ENCODE measurements at regions of chr14 and their contacts with region 1.

Region 1: DNA sequence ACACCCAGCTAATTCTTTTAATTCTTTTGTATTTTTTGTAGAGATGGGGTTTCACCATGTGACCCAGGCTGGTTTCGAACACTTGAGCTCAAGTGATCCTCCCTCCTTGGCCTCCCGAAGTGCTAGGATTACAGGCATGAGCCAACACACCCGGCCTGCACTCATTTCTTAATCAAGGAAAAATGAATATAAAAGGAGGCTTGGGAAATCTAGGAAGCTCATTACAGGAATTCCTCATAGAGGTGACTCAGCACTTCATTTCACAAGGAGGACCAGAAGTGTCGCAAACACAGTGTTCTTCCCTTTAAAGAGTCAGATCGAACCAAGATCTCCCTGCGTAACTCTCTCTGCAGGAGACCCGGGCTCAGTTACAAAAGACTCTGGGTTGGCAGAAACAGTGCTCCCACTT is 30.3 kb downstream of the NFKBIA start:
- DNase-seq: no peak
- H3K4me3 ChIP-seq: no peak overlapping the region
- H3K27ac ChIP-seq: peak overlapping the region; percentile 57 to 78 (median 76)
- H3K4me1 ChIP-seq: peaks cover 12 to 36% (median 32%) of the 10 kb centered on the region in 3 donors
- H3K27me3 ChIP-seq: no peaks in the 10 kb centered on the region
- CTCF ChIP-seq: no peak
- POLR2A ChIP-seq: no peak

Region 2: GRCh38 chr14:34582117-34582680 is 792.1 kb before region 1 on chr14:
- intact Hi-C with region 1: no loop called
- DNase-seq: no peak
- H3K4me3 ChIP-seq: no peak overlapping the region
- H3K27ac ChIP-seq: no peak overlapping the region
- H3K4me1 ChIP-seq: no peaks in the 10 kb centered on the region
- H3K27me3 ChIP-seq: no peaks in the 10 kb centered on the region
- CTCF ChIP-seq: no peak
- POLR2A ChIP-seq: no peak

Region 3: GRCh38 chr14:35114034-35114433 is 260.2 kb before region 1 on chr14:
- intact Hi-C with region 1: no loop called
- DNase-seq: no peak
- H3K4me3 ChIP-seq: no peak overlapping the region
- H3K27ac ChIP-seq: no peak overlapping the region
- H3K4me1 ChIP-seq: peaks cover 0 to 16% (median 0%) of the 10 kb centered on the region in 3 donors
- H3K27me3 ChIP-seq: no peaks in the 10 kb centered on the region
- CTCF ChIP-seq: no peak
- POLR2A ChIP-seq: no peak

Region 4: DNA sequence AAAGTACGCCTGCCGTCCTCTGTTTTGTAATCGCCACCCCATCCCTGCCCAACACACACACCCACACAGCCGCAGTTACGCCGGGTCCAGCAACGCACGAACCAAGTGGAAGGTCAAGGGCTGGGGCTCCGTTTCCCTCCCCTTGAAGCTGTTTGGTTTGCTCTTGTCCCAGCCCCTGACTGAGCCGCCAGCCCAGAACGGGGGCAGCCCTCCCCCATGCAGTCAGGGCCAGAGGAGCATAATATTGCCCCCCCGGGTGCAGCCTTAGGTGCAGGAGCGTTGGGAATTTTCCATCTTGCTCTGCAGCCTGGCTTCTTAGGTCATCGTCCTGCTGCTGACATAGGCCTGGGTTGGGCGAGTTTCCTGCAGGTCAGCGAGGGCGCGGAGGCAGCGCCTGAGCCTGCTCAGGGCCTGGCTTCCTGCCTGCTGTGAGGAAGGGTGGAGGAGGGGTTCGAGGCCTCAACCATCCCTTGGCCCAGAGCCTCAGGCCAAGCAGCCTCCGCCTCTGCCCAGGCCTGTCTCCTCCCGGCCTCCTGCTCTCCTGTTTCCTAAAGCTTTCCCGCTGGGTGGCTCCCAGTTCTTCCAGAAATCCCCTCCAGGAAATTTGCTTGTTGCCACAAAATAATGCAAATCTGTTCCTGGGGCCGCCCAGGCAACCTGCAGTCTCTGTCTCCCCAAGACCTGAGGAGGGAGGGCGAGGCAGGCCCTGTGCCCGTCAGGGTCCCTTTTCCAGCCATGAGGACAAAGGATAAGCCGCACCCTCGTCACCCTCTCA is 37.6 kb before region 1 on chr14:
- intact Hi-C with region 1: loop called (anchors 2 kb)
- DNase-seq: peak; percentile 56
- H3K4me3 ChIP-seq: peak overlapping the region in 2 of 4 donors; percentile 6 to 26
- H3K27ac ChIP-seq: peak overlapping the region; percentile 84 to 94 (median 90)
- H3K4me1 ChIP-seq: peaks cover 91 to 100% (median 94%) of the 10 kb centered on the region in 3 donors
- H3K27me3 ChIP-seq: no peaks in the 10 kb centered on the region
- CTCF ChIP-seq: peak in 2 of 6 experiments; percentile 9
- POLR2A ChIP-seq: peak in 2 of 4 donors; percentile 2 to 37

Region 5: DNA sequence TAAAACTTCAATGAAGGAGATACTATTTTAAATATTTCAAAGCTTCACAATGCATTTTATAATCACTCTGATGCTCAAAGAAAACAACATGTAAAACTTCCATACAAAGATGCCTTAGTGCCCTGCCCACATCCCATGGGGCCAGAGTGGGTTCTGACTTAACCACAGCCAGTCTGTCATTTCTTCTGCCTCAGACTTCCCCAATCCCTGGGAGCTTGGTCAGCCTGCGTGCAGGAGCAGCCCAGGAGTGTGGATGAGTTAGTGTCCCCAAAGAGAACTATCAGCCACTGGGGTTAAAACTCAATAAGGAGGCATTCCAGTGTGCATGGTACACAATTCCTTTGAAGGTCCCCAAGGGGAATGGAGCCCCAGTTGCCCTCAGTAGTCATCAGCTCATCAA is 701.9 kb after region 1 on chr14:
- intact Hi-C with region 1: no loop called
- DNase-seq: no peak
- H3K4me3 ChIP-seq: no peak overlapping the region
- H3K27ac ChIP-seq: no peak overlapping the region
- H3K4me1 ChIP-seq: no peaks in the 10 kb centered on the region
- H3K27me3 ChIP-seq: peaks cover 0 to 10% (median 0%) of the 10 kb centered on the region in 4 donors
- CTCF ChIP-seq: no peak
- POLR2A ChIP-seq: no peak